ENCODE measurements at regions of chr4 and their contacts with region 1.

Region 1: DNA sequence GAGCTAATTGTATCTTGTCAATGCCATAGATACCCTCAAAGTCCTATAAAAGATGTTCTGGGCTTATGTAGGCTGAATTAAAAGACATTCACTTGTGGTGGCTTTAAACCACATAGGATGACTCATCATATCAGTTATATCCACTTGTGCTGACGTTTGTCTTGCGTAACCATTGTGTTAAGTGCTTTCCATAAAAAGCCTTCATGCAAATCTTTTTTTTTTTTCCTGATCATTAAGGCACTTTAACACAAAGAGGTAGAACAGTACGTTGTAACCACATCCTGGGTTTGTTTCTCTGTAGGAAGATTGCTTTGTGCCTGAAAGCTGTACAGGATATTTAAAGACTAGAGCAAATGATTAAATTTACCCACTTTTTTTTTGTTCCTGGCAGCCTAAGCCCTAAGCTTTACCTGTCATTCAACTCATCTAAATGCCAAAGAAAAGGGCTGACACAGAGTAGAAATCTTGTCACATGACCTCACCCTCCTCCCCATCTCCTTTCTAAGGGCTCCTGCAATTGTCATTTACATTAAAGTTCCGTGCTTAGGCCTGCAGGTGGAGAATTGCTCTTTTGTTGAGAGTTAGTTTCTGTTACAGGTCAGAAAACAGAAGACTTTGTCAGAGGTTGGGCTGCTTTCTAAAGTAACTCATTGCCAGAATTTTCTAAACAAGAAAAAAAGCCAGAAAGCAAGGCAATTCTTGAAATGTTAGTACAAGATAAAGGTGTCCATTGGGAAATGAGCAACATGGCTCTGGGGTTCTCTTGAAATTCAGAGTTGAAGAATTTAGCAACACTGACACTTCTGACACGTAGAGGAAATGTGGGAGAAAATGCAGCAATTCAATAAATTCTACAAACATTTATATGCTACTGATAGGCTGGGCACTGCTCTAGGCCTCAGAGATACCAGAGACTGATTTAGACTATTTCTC is 555.6 kb downstream of the PPARGC1A start:
- DNase-seq: peak in 8 of 9 donors; percentile 31 to 89 (median 86)
- ATAC-seq: peak; percentile 91
- H3K4me3 ChIP-seq: peak overlapping the region; percentile 21
- H3K4me3 Mint-ChIP-seq: peak overlapping the region; percentile 34 to 78 (median 58)
- H3K27ac ChIP-seq: peak overlapping the region; percentile 45
- H3K27ac Mint-ChIP-seq: peak overlapping the region; percentile 68 to 97 (median 89)
- H3K4me1 ChIP-seq: peaks cover 6 to 20% of the 10 kb centered on the region in 2 donors
- H3K4me1 Mint-ChIP-seq: peaks cover 20 to 49% (median 35%) of the 10 kb centered on the region in 7 donors
- H3K27me3 ChIP-seq: no peaks in the 10 kb centered on the region
- H3K27me3 Mint-ChIP-seq: no peaks in the 10 kb centered on the region

Region 2: DNA sequence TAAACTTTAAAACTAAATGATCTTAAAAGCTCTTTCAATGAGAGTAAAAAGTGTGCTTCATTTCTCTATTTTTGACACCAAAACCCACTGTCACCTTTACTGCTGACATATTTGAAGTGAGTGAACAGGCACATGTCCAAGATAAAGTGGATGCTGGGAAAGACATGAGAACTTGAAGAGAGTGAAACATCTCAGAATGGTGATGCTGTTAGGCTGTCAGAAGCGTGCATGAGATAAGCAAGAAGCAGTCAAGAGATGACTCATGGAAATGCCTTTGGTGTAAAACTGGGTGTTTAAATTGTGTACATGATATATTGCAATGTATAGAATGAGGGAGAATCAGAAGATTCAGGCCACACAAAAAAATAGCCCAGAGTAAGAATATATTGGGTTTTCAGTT is 663.3 kb before region 1 on chr4:
- CTCF ChIA-PET with region 1: no interaction called
- POLR2A ChIA-PET with region 1: no interaction called
- intact Hi-C with region 1: loop called in 1 of 2 experiments (anchors 5 kb)
- DNase-seq: no peak
- ATAC-seq: no peak
- H3K4me3 ChIP-seq: no peak overlapping the region
- H3K4me3 Mint-ChIP-seq: peak overlapping the region in 3 of 10 donors; percentile 7 to 62 (median 57)
- H3K27ac ChIP-seq: no peak overlapping the region
- H3K27ac Mint-ChIP-seq: peak overlapping the region in 7 of 9 donors; percentile 12 to 94 (median 71)
- H3K4me1 ChIP-seq: peaks cover 0 to 56% of the 10 kb centered on the region in 2 donors
- H3K4me1 Mint-ChIP-seq: peaks cover 41 to 92% (median 82%) of the 10 kb centered on the region in 7 donors
- H3K27me3 ChIP-seq: no peaks in the 10 kb centered on the region
- H3K27me3 Mint-ChIP-seq: no peaks in the 10 kb centered on the region

Region 3: GRCh38 chr4:23305026-23305425 is 29.2 kb before region 1 on chr4:
- CTCF ChIA-PET with region 1: no interaction called
- POLR2A ChIA-PET with region 1: no interaction called
- intact Hi-C with region 1: loop called in 1 of 2 experiments (anchors 1 kb)
- DNase-seq: no peak
- ATAC-seq: no peak
- H3K4me3 ChIP-seq: no peak overlapping the region
- H3K4me3 Mint-ChIP-seq: no peak overlapping the region
- H3K27ac ChIP-seq: no peak overlapping the region
- H3K27ac Mint-ChIP-seq: no peak overlapping the region
- H3K4me1 ChIP-seq: no peaks in the 10 kb centered on the region
- H3K4me1 Mint-ChIP-seq: peaks cover 5 to 16% (median 9%) of the 10 kb centered on the region in 7 donors
- H3K27me3 ChIP-seq: no peaks in the 10 kb centered on the region
- H3K27me3 Mint-ChIP-seq: no peaks in the 10 kb centered on the region

Region 4: DNA sequence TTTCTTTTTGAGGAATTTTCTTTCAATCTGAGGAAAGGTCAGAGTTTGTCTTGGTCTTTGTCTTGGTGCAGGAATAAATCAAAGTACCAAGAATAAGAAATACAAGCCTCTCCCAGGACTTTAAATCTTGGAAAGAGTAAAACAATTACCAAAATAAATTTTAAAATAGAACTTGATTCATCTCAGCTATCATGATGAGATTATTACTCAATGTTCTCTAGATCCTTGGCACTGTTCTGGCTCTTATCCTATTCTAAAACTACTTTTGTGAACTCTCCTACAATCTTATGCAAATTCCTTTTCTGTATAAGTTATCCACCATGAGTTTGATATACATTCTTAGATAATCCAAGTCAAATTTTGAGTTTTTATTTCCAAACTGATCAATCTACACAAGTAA is 91.4 kb after region 1 on chr4:
- CTCF ChIA-PET with region 1: no interaction called
- POLR2A ChIA-PET with region 1: no interaction called
- intact Hi-C with region 1: no loop called
- DNase-seq: no peak
- ATAC-seq: no peak
- H3K4me3 ChIP-seq: no peak overlapping the region
- H3K4me3 Mint-ChIP-seq: no peak overlapping the region
- H3K27ac ChIP-seq: no peak overlapping the region
- H3K27ac Mint-ChIP-seq: no peak overlapping the region
- H3K4me1 ChIP-seq: no peaks in the 10 kb centered on the region
- H3K4me1 Mint-ChIP-seq: no peaks in the 10 kb centered on the region
- H3K27me3 ChIP-seq: no peaks in the 10 kb centered on the region
- H3K27me3 Mint-ChIP-seq: peaks cover 0 to 15% (median 7%) of the 10 kb centered on the region in 5 donors

Region 5: GRCh38 chr4:23614284-23614892 is 280.2 kb after region 1 on chr4:
- CTCF ChIA-PET with region 1: no interaction called
- POLR2A ChIA-PET with region 1: no interaction called
- intact Hi-C with region 1: loop called in 1 of 2 experiments (anchors 5 kb)
- DNase-seq: no peak
- ATAC-seq: no peak
- H3K4me3 ChIP-seq: no peak overlapping the region
- H3K4me3 Mint-ChIP-seq: no peak overlapping the region
- H3K27ac ChIP-seq: no peak overlapping the region
- H3K27ac Mint-ChIP-seq: no peak overlapping the region
- H3K4me1 ChIP-seq: no peaks in the 10 kb centered on the region
- H3K4me1 Mint-ChIP-seq: no peaks in the 10 kb centered on the region
- H3K27me3 ChIP-seq: no peaks in the 10 kb centered on the region
- H3K27me3 Mint-ChIP-seq: no peaks in the 10 kb centered on the region

Region 6: DNA sequence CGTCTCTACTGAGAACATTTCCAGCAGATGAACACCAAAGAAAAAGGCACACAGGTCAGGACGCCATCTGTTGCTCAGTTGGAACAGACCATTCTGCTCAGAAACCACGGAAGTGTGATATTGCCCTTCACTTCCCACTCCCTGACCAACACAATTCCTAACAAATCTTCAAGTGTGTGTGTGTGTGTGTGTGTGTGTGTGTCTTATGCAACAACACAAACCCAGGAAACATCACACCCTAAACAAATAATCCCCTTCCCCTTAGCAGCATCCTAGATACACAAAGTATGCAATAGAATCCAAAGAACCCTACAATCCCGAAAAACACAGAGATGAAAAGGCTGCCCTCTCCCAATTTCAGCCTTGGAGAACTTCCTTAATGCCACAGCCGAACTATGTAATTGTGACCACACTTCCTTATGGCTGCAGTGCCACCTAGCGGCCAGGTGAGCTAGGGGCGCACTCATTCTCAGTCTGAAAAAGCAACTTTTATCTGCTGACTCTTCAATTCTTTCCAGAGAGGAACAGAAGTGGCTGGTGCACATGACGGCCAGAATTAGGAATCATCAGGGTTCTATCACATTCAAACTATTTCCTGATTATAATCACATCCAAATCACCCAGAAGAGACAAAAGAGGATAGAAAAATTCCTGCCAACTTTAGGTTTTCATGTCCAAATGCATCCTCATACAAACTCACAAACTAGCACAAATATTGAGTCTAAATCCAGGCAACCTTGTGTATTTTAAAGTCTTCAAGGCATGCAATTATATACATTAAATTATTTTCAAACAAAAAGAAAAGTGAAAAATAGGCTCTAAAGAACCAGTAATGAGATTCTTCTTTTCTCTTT is 1085.2 kb after region 1 on chr4:
- CTCF ChIA-PET with region 1: interaction called, 4 read pairs
- POLR2A ChIA-PET with region 1: no interaction called
- intact Hi-C with region 1: loop called (anchors 1 kb)
- DNase-seq: peak; percentile 10 to 68 (median 36)
- ATAC-seq: peak; percentile 64
- H3K4me3 ChIP-seq: no peak overlapping the region
- H3K4me3 Mint-ChIP-seq: peak overlapping the region in 3 of 10 donors; percentile 10 to 54 (median 28)
- H3K27ac ChIP-seq: no peak overlapping the region
- H3K27ac Mint-ChIP-seq: no peak overlapping the region
- H3K4me1 ChIP-seq: no peaks in the 10 kb centered on the region
- H3K4me1 Mint-ChIP-seq: peaks cover 0 to 5% (median 5%) of the 10 kb centered on the region in 7 donors
- H3K27me3 ChIP-seq: no peaks in the 10 kb centered on the region
- H3K27me3 Mint-ChIP-seq: peaks cover 2 to 21% (median 12%) of the 10 kb centered on the region in 5 donors